ENCODE measurements at regions of chr15 and their contacts with region 1.

Region 1: GRCh38 chr15:75201609-75202250 is at the start of gene C15orf39:
- DNase-seq: peak; percentile 94
- H3K4me3 Mint-ChIP-seq: peak within 1 kb of the TSS; percentile 94
- H3K27ac Mint-ChIP-seq: peak within 1 kb of the TSS; percentile 90
- H3K4me1 Mint-ChIP-seq: peaks cover 59% of the 10 kb centered on the region
- H3K27me3 Mint-ChIP-seq: no peaks in the 10 kb centered on the region
- total RNA-seq, gene C15orf39: 43.2 and 43.9 TPM in 2 replicates

Region 2: DNA sequence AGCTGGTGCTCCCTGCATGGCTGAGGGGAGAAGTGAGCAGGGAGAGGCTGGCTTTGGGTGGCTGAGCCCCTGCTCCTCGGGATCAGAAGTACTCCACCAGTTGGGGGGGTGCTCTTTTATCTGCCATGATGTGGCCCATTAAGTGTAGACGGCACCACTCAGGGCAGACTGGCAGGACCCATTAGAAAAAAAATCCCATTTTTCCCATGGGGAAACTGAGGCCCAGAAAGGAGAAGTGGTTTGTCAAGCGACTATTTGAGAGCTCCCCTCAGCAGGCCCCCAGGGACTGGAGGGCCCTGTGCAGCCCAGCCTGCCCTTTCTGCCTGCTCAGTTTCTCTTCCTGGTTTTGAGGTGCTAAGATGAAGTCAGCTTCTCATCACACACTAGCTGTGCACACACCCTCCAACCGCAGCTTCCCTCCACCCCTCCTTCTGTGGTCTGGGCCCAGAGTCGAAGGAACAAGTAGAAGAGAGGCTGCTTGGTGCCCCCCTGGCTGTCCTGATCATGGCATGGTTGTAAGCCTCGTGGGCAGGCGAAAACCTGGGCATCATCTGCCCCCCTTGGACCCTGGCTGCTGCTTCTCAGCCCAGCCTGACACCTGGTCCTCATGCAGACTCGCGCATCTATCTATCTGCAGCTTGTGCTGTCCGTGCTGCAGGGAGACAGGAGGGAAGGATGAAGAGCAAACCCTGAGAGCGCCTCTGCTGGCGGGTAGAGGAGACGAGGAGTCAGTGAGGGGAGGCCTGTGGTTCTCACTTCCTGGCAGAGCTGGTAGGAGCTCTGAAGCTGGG is 414.3 kb before region 1 on chr15:
- intact Hi-C with region 1: loop called (anchors 5 kb)
- DNase-seq: peak; percentile 97
- H3K4me3 Mint-ChIP-seq: peak overlapping the region; percentile 96
- H3K27ac Mint-ChIP-seq: peak overlapping the region; percentile 99
- H3K4me1 Mint-ChIP-seq: peaks cover 68% of the 10 kb centered on the region
- H3K27me3 Mint-ChIP-seq: no peaks in the 10 kb centered on the region

Region 3: DNA sequence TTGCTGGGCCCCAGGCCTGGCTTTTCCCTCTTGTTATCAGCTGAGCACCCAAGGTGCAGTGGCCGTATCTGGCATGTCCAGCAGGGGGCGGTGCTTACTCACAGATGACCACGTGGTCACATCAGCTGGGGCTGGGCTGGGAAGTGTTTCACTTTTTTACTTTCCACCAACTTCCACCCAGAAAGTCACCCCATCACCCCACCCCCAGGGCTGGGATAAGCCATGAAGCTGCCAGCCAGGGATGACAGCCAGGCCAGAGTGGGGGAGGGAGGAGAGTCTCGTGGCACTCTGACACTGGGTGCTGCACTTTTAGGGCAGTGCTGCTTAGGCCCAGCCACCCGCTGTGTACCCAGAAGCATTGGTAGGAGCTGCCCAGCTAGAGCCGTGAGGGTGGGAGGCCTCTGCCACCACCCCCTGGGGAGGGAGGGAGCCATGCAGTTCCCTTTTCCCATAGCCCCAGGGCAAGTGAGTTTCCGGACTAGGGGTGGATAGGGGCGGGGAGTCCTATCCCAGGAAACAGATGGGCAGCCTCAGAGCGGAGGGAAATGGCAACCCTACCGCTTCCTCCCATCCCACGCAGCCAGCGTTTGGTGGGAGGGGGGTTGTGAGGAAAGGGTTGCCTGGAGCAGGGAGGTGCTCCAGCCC is 172.2 kb before region 1 on chr15:
- intact Hi-C with region 1: loop called (anchors 1 kb)
- DNase-seq: peak; percentile 97
- H3K4me3 Mint-ChIP-seq: peak overlapping the region; percentile 26
- H3K27ac Mint-ChIP-seq: peak overlapping the region; percentile 76
- H3K4me1 Mint-ChIP-seq: peaks cover 44% of the 10 kb centered on the region
- H3K27me3 Mint-ChIP-seq: no peaks in the 10 kb centered on the region

Region 4: GRCh38 chr15:75104804-75105535 is 96.8 kb before region 1 on chr15:
- intact Hi-C with region 1: loop called (anchors 5 kb)
- DNase-seq: peak; percentile 87
- H3K4me3 Mint-ChIP-seq: peak overlapping the region; percentile 47
- H3K27ac Mint-ChIP-seq: peak overlapping the region; percentile 88
- H3K4me1 Mint-ChIP-seq: peaks cover 35% of the 10 kb centered on the region
- H3K27me3 Mint-ChIP-seq: peaks cover 7% of the 10 kb centered on the region

Region 5: GRCh38 chr15:75171408-75171807 is 30.3 kb before region 1 on chr15:
- intact Hi-C with region 1: loop called (anchors 2 kb)
- DNase-seq: peak; percentile 79
- H3K4me3 Mint-ChIP-seq: peak overlapping the region; percentile 41
- H3K27ac Mint-ChIP-seq: peak overlapping the region; percentile 74
- H3K4me1 Mint-ChIP-seq: peaks cover 45% of the 10 kb centered on the region
- H3K27me3 Mint-ChIP-seq: peaks cover 3% of the 10 kb centered on the region

Region 6: GRCh38 chr15:75229191-75230015 is 27.7 kb after region 1 on chr15:
- intact Hi-C with region 1: no loop called
- DNase-seq: no peak
- H3K4me3 Mint-ChIP-seq: no peak overlapping the region
- H3K27ac Mint-ChIP-seq: no peak overlapping the region
- H3K4me1 Mint-ChIP-seq: no peaks in the 10 kb centered on the region
- H3K27me3 Mint-ChIP-seq: peaks cover 9% of the 10 kb centered on the region

Region 7: GRCh38 chr15:75436861-75437260 is 235.1 kb after region 1 on chr15:
- intact Hi-C with region 1: no loop called
- DNase-seq: no peak
- H3K4me3 Mint-ChIP-seq: no peak overlapping the region
- H3K27ac Mint-ChIP-seq: no peak overlapping the region
- H3K4me1 Mint-ChIP-seq: peaks cover 14% of the 10 kb centered on the region
- H3K27me3 Mint-ChIP-seq: no peaks in the 10 kb centered on the region